ENCODE measurements at regions of chr10 and their contacts with region 1.

Region 1: DNA sequence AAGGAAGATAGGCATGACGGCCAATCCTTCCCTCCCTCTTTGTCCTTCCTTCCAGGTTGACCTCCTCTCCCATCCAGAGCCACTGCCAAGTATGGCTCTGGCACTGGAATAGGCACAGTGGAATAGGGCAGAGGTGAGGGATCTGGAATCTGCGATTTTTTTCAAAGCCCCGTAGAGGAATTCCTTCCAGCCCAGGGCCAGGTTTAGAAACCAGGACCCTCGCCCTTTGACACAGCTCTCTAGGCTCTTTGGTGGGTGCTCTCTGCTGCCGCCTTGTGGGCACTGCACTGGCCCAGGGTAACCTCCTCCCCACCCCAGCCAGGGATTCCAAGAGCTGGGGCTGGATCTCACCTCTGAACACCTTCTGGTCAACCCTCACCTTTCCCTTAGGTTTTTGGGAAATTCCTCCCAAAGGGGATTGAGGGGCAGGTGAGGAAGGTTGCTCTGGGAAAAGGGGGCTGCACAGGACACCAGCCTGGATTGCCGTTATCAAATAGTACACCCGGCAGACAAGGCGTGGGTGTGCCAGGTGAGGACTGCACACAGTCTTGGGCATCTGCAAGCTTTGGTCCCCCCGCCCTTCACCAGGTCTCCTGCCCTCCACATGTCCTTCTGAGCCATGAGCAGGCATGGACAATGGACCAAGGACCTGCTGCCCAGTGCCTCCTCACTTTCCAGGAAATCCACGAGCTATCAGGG is 22.8 kb downstream of the C10orf105 start:
- DNase-seq: peak; percentile 75
- H3K4me3 Mint-ChIP-seq: no peak overlapping the region
- H3K27ac Mint-ChIP-seq: no peak overlapping the region
- H3K4me1 Mint-ChIP-seq: peaks cover 41% of the 10 kb centered on the region
- H3K27me3 Mint-ChIP-seq: no peaks in the 10 kb centered on the region

Region 2: GRCh38 chr10:71314028-71314693 is 382.6 kb before region 1 on chr10:
- CTCF ChIA-PET with region 1: interaction called, 39 read pairs
- POLR2A ChIA-PET with region 1: interaction called, 3 read pairs
- intact Hi-C with region 1: no loop called
- DNase-seq: peak; percentile 67
- H3K4me3 Mint-ChIP-seq: no peak overlapping the region
- H3K27ac Mint-ChIP-seq: no peak overlapping the region
- H3K4me1 Mint-ChIP-seq: peaks cover 9% of the 10 kb centered on the region
- H3K27me3 Mint-ChIP-seq: peaks cover 7% of the 10 kb centered on the region

Region 3: DNA sequence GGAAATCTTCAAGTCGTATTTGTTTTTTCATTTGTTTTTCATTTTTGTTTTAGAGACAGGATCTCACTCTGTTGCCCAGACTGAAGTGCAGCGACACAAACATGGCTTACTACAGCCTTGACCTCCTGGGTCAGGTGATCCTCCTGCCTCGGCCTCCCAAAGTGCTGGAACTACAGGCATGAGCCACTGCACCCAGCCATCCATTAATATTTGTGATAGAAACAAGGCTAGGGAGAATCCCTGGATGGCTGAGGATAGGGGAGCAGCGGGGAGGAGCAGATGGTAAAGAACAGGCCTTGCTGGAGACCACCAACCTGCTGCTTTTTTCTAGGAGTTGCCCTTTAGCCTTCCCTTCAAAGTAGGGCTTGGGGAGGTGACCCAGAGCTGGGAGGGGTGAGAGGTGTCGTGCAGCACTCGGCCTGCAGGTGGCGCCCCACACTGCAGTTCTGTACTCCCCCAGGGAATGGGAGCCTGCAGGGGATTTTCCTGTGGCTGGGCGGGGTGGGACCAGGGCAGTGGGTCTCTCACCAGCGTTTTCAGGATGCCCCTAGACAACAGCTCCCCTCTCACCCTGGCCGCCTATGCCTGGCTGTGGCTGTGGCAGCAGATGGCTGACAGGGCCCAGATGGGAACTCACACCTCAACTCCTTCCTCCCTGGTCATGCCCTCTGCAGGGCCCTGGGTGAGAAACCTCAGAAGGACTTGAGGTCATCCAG is 312.6 kb before region 1 on chr10:
- CTCF ChIA-PET with region 1: interaction called, 8 read pairs
- POLR2A ChIA-PET with region 1: no interaction called
- intact Hi-C with region 1: loop called (anchors 2 kb)
- DNase-seq: peak; percentile 81
- H3K4me3 Mint-ChIP-seq: no peak overlapping the region
- H3K27ac Mint-ChIP-seq: no peak overlapping the region
- H3K4me1 Mint-ChIP-seq: no peaks in the 10 kb centered on the region
- H3K27me3 Mint-ChIP-seq: peaks cover 1% of the 10 kb centered on the region

Region 4: GRCh38 chr10:71713135-71714030 is 16.6 kb after region 1 on chr10:
- CTCF ChIA-PET with region 1: interaction called, 131 read pairs
- POLR2A ChIA-PET with region 1: interaction called, 3 read pairs
- intact Hi-C with region 1: loop called (anchors 2 kb)
- DNase-seq: peak; percentile 63
- H3K4me3 Mint-ChIP-seq: peak overlapping the region; percentile 66
- H3K27ac Mint-ChIP-seq: peak overlapping the region; percentile 91
- H3K4me1 Mint-ChIP-seq: peaks cover 54% of the 10 kb centered on the region
- H3K27me3 Mint-ChIP-seq: no peaks in the 10 kb centered on the region

Region 5: DNA sequence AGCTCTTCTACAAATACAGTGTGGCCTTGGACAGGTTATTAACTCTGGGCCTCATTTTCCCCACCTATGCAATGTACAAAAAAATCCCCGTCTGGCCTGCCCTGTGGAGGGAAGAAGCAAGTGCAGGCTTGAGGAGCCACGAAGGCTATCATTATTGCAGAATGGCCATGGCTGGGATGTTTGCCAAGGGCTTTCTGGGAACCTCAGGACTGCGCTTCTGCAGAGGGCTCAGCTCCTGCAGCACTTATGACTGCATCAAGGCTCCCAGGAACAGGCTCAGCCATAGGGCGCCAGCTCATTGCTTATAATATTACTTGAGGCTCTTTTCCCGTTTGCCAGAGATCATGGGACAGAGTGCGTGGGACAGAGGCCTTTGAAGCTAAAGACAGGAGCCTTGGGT is 43.3 kb after region 1 on chr10:
- CTCF ChIA-PET with region 1: interaction called, 12 read pairs
- POLR2A ChIA-PET with region 1: interaction called, 3 read pairs
- intact Hi-C with region 1: loop called (anchors 5 kb)
- DNase-seq: no peak
- H3K4me3 Mint-ChIP-seq: no peak overlapping the region
- H3K27ac Mint-ChIP-seq: peak overlapping the region; percentile 98
- H3K4me1 Mint-ChIP-seq: peaks cover 99% of the 10 kb centered on the region
- H3K27me3 Mint-ChIP-seq: no peaks in the 10 kb centered on the region

Region 6: DNA sequence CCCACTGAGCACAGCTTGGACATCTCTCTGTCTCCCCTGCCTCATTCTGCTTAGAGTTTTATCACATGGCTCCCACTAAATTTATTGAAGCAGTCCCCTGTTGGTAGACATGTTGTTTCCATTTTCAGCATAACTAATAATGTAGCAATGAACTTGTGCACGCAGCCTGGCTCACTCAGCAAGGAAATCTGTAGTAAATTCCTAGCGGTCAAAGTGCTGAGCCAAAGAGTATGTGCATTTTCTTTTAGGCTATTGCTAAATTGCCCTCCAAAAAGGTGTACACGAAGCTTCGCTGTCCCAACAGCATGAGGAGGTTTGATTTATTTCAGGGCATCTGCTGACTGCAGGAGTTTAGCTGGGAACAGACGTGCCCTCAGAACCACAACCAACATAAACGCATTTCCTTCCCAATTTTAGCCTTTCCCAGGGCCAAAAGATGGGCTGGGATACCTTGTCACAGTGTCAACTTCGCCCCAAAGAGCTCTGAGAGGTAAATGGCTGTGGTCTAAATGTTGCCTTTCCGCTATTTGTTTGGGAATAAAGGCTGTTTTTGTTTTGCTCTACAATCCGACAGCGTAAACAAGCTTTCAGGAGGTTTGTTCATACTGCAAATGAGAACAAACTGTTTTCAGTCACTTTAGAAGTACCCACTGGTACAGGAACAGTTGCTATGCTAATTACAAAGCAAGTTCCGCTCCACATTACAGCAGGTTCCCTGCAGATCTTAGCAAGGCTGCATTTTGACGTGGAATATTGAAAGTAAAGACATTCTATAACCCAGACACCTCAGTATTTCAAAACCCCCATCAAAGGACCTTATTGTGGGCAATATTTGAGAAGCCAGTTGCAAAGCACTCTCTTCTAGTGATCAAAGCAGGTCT is 59.8 kb after region 1 on chr10:
- CTCF ChIA-PET with region 1: interaction called, 11 read pairs
- POLR2A ChIA-PET with region 1: no interaction called
- intact Hi-C with region 1: no loop called
- DNase-seq: no peak
- H3K4me3 Mint-ChIP-seq: peak overlapping the region; percentile 63
- H3K27ac Mint-ChIP-seq: peak overlapping the region; percentile 95
- H3K4me1 Mint-ChIP-seq: peaks cover 94% of the 10 kb centered on the region
- H3K27me3 Mint-ChIP-seq: no peaks in the 10 kb centered on the region

Region 7: GRCh38 chr10:71771821-71772617 is 75.2 kb after region 1 on chr10:
- CTCF ChIA-PET with region 1: interaction called, 100 read pairs
- POLR2A ChIA-PET with region 1: interaction called, 4 read pairs
- intact Hi-C with region 1: loop called (anchors 2 kb)
- DNase-seq: peak; percentile 72
- H3K4me3 Mint-ChIP-seq: peak overlapping the region; percentile 92
- H3K27ac Mint-ChIP-seq: peak overlapping the region; percentile 99
- H3K4me1 Mint-ChIP-seq: peaks cover 80% of the 10 kb centered on the region
- H3K27me3 Mint-ChIP-seq: no peaks in the 10 kb centered on the region